Left ventricle myocardium inferior (tissue), 1 donor: ENCODE measurements at regions of chr13 and their contacts with region 1.

Region 1: GRCh38 chr13:37602747-37603381 is 4.3 kb upstream of the POSTN start:
- DNase-seq: no peak
- H3K4me3 ChIP-seq: no peak overlapping the region
- H3K27ac ChIP-seq: no peak overlapping the region
- H3K4me1 ChIP-seq: peaks cover 10% of the 10 kb centered on the region
- H3K27me3 ChIP-seq: no peaks in the 10 kb centered on the region
- CTCF ChIP-seq: peak; percentile 75

Region 2: GRCh38 chr13:37074703-37075102 is 528.2 kb before region 1 on chr13:
- intact Hi-C with region 1: loop called (anchors 10 kb)
- DNase-seq: no peak
- H3K4me3 ChIP-seq: no peak overlapping the region
- H3K27ac ChIP-seq: no peak overlapping the region
- H3K4me1 ChIP-seq: no peaks in the 10 kb centered on the region
- H3K27me3 ChIP-seq: peaks cover 4% of the 10 kb centered on the region
- CTCF ChIP-seq: peak; percentile 59

Region 3: DNA sequence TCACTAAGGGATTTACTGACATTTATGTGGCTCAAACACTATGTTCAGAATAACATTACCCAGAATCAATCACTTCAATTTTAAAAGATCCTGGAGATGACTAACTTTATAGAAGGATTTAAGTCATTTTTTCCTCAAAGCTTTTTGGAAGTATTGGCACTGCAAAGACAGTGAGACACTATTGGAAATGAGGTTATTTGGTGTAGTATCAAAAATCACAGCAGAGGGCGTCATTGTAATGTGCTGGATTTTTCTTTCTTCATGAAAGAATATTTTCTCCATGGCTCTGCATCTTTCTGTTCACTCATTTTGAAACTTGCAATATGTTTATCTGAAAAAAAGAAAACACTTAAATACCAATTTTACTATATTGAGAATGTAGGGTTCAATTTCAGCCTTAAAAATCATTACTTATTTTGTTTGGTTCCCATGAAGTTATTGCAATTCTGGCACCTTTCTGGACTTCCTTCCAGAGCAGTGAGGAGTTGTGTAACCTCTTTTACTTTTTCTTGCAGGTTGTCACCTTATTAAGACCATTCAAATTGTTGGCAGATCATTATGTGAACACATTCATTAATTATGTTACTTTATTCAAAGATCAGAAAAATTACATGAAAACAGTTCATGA is 493.7 kb before region 1 on chr13:
- intact Hi-C with region 1: loop called (anchors 2 kb)
- DNase-seq: no peak
- H3K4me3 ChIP-seq: no peak overlapping the region
- H3K27ac ChIP-seq: no peak overlapping the region
- H3K4me1 ChIP-seq: peaks cover 3% of the 10 kb centered on the region
- H3K27me3 ChIP-seq: no peaks in the 10 kb centered on the region
- CTCF ChIP-seq: peak; percentile 81

Region 4: GRCh38 chr13:37338726-37339385 is 264.0 kb before region 1 on chr13:
- intact Hi-C with region 1: no loop called
- DNase-seq: no peak
- H3K4me3 ChIP-seq: no peak overlapping the region
- H3K27ac ChIP-seq: no peak overlapping the region
- H3K4me1 ChIP-seq: no peaks in the 10 kb centered on the region
- H3K27me3 ChIP-seq: no peaks in the 10 kb centered on the region
- CTCF ChIP-seq: no peak